Activated CD4-positive, alpha-beta memory T cell treated with anti-CD3 and anti-CD28 coated beads for 36 hours (primary cell): ENCODE measurements at regions of chr11 and their contacts with region 1.

Region 1: DNA sequence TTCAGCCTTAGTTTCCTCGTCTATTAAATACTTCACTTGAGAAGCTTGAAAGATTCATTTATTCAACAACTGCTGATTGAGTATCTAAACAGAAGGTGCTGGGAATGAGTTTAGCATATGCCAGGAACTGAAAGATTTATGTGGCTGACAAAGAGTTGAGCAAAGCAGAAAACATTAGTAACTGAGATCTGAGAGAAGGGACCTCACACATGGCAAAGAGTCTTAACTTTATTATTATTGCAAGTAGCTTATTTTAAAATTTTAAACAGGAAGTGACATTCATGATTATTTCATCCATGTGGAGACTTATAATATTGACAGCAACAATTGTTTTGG is 133.6 kb downstream of the CASP12 start:
- DNase-seq: no peak
- H3K4me3 Mint-ChIP-seq: no peak overlapping the region
- H3K27ac Mint-ChIP-seq: no peak overlapping the region
- H3K4me1 Mint-ChIP-seq: peaks cover 16% of the 10 kb centered on the region
- H3K27me3 Mint-ChIP-seq: no peaks in the 10 kb centered on the region

Region 2: GRCh38 chr11:104799251-104799650 is 34.6 kb after region 1 on chr11:
- CTCF ChIA-PET with region 1: no interaction called
- POLR2A ChIA-PET with region 1: no interaction called
- intact Hi-C with region 1: loop called (anchors 2 kb)
- DNase-seq: no peak
- H3K4me3 Mint-ChIP-seq: peak overlapping the region; percentile 20
- H3K27ac Mint-ChIP-seq: peak overlapping the region; percentile 58
- H3K4me1 Mint-ChIP-seq: peaks cover 31% of the 10 kb centered on the region
- H3K27me3 Mint-ChIP-seq: no peaks in the 10 kb centered on the region